ENCODE measurements at regions of chr3 and their contacts with region 1.

Region 1: DNA sequence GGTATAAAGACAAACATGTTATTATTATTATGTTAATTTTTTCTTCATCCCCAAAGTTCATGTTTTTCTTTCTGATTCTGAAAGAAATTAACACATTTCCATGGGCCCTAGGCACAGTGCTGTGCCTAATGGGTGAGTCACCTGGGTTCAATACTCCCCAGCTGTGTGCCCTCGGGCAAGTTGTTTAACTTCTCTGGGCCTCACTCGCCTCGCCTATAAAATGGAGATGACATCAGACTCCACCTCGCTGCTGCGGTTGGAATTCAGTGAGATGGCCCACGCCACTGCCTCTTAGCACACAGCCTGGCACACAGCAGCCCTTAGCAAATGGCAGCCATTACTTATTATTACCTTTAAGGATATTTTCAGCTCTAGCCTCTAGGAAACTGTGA is 22.6 kb downstream of the DNASE1L3 start:
- DNase-seq: peak; percentile 54
- H3K4me3 ChIP-seq: no peak overlapping the region
- H3K27ac ChIP-seq: no peak overlapping the region
- H3K4me1 ChIP-seq: no peaks in the 10 kb centered on the region
- H3K27me3 ChIP-seq: no peaks in the 10 kb centered on the region

Region 2: DNA sequence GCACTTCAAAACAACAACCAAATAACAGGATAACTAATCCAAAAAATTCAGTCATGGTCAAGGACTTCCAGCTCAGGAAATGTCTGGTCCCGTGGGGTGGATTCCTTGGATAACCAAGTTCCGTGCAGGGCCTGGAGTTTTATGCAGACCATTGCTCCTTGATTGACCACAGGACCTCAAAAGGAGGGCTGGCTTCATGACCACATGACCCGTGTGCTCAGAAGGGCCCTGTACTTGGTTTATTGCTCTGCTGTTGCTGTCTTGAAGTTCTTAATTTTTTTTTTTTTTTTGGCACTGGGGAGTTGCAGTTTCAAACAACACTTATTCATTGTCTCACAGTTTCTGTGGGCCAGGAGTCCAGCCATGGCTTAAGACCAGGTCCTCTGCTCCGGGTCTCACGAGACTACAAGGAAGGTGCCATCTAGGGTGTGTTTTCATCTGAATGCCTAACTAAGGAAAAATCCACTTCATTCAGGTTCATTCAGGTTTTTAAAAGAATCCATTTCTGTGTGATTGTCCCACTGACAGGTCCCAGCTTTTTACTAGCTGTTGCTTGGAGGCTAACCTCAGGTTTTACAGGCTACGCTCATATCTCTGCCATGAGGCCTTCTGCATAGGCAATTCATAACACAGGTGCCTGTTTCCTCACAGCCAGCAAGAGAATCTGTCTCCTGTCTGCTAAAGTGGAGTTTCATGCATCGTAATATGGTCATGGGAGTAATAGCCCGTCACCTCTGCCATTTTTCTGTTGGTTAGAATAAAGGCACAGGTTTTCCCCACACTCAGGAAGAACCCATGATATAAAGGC is 114.7 kb before region 1 on chr3:
- in situ Hi-C with region 1: no loop called
- DNase-seq: peak; percentile 33
- H3K4me3 ChIP-seq: no peak overlapping the region
- H3K27ac ChIP-seq: no peak overlapping the region
- H3K4me1 ChIP-seq: peaks cover 20% of the 10 kb centered on the region
- H3K27me3 ChIP-seq: no peaks in the 10 kb centered on the region

Region 3: DNA sequence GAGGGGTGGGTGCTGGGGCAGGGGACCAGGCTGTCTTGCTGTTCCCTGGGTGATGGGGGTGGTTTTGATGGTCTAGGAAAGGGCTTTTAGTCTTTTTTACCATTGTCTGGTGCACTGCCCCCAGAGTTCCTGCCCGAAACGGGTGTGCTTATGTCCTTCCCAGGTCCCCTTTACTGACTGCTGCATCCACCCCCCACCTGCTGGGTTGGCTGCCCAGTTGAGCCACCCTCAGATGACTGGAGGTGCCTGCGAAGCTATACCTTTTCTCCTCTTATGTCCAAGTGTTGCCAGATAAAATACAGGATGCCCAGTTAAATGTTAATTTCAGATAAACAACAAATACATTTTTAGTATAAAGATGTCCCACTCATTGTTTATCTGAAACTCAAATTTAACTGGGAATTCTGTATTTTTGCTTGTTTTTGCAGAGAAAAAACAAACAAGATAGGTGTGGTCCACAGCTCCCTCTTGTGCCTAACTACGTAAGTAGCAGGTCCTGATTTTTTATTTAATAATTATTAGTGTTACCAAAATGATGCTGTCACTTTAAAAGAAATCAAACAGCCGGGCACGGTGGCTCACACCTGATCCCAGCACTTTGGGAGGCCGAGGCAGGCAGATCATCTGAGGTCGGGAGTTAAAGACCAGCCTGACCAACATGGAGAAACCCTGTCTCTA is 111.8 kb after region 1 on chr3:
- in situ Hi-C with region 1: loop called (anchors 5 kb)
- DNase-seq: peak; percentile 74
- H3K4me3 ChIP-seq: no peak overlapping the region
- H3K27ac ChIP-seq: no peak overlapping the region
- H3K4me1 ChIP-seq: no peaks in the 10 kb centered on the region
- H3K27me3 ChIP-seq: peaks cover 11% of the 10 kb centered on the region; the same call in 1 of the 2 replicates

Region 4: DNA sequence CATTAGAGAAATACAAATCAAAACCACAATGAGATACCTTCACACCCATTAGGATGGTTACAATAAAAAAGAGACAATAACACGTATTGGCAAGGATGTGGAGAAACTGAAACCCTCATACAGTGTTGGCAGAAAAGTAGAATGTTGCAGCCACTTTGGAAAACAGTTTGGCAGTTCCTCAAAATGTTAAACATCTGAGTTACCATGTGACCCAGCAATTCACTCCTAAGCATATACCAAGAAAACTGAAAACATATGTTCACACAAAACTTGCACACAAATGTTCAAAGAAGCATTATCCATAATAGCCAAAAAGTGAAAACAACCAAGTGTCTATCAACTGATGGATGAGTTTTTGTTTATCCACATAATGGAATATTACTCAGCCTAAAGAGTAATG is 645.3 kb after region 1 on chr3:
- in situ Hi-C with region 1: no loop called
- DNase-seq: peak; percentile 13
- H3K4me3 ChIP-seq: no peak overlapping the region
- H3K27ac ChIP-seq: no peak overlapping the region
- H3K4me1 ChIP-seq: peaks cover 29% of the 10 kb centered on the region
- H3K27me3 ChIP-seq: no peaks in the 10 kb centered on the region